Prostate gland (tissue), 2 donors: ENCODE measurements at regions of chr14 and their contacts with region 1.

Region 1: GRCh38 chr14:57533214-57533613 is 39.6 kb upstream of the CCDC198 start:
- DNase-seq: no peak
- H3K4me3 ChIP-seq: no peak overlapping the region
- H3K27ac ChIP-seq: no peak overlapping the region
- H3K4me1 ChIP-seq: no peaks in the 10 kb centered on the region
- H3K27me3 ChIP-seq: no peaks in the 10 kb centered on the region
- CTCF ChIP-seq: peak in 3 of 4 experiments; percentile 25 to 45 (median 40)
- POLR2A ChIP-seq: no peak

Region 2: GRCh38 chr14:57889245-57889644 is 356.0 kb after region 1 on chr14:
- intact Hi-C with region 1: loop called (anchors 10 kb)
- DNase-seq: peak; percentile 9
- H3K4me3 ChIP-seq: no peak overlapping the region
- H3K27ac ChIP-seq: no peak overlapping the region
- H3K4me1 ChIP-seq: no peaks in the 10 kb centered on the region
- H3K27me3 ChIP-seq: no peaks in the 10 kb centered on the region
- CTCF ChIP-seq: no peak
- POLR2A ChIP-seq: no peak